Right ventricle myocardium inferior (tissue), 1 donor: ENCODE measurements at regions of chr9 and their contacts with region 1.

Region 1: GRCh38 chr9:92634712-92635605 is 35.0 kb downstream of the IPPK start:
- DNase-seq: peak; percentile 84
- ATAC-seq: peak; percentile 82

Region 2: DNA sequence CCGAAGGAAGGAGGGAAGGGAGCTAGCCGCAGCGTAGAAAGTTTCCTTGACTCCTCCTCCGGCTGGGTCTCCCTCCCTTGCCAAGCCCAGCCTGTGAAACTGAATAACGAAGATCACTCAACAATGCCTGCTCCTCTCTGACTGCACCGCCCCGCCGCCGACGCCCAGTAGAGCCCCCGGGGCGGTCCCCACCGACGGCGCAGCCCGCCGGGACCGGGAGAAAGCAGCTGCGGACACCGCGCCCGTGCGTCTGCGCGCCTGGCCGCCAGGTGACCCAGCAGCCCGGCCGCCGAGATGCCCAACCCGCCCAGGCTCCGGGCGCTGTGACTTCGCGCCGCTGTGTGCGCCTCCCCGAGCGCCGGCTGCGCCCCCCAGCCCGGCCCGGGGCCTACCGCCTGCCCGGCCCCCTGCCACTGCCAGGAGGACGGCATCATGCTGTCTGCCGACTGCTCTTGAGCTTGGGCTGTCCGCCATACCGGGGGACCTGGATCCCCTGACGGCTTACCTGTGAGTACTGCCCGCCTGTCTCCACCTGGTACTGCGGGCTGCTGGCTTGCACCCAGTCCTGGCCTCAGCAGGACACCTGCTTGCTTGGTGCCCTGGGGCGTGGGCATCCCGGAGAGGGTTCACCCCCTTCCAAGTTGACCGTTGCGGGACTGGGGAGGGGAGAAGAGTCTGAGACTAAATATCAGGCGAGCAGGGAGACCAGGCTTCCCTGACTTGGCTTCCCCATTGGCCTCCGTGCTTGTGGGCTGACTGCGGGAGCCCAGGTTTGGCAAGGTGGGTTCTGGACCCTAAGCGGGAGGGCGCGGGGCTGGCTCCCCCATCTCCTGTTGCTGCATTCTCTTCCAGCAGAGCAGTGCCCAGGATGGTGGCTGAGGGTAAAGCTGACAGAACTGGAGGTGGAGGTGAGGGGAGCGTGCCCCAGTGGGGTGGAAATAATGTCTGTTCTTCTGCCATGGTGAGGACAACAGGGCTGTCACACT is 493.5 kb before region 1 on chr9:
- intact Hi-C with region 1: loop called (anchors 2 kb)
- DNase-seq: peak; percentile 50
- ATAC-seq: peak; percentile 23

Region 3: GRCh38 chr9:92325269-92325990 is 309.5 kb before region 1 on chr9 and contains the starts of genes CENPP and NOL8:
- intact Hi-C with region 1: loop called (anchors 5 kb)
- DNase-seq: peak; percentile 93
- ATAC-seq: peak; percentile 98
- total RNA-seq, gene CENPP: 3.3 TPM
- total RNA-seq, gene NOL8: 14.2 TPM

Region 4: GRCh38 chr9:92342825-92343488 is 292.0 kb before region 1 on chr9:
- intact Hi-C with region 1: loop called (anchors 5 kb)
- DNase-seq: no peak
- ATAC-seq: no peak